MCF 10A (cell line): ENCODE measurements at regions of chr2 and their contacts with region 1.

Region 1: GRCh38 chr2:20661067-20661980 is 5.6 kb upstream of the GDF7 start:
- DNase-seq: peak; percentile 82
- H3K4me3 Mint-ChIP-seq: no peak overlapping the region
- H3K27ac Mint-ChIP-seq: no peak overlapping the region
- H3K4me1 Mint-ChIP-seq: peaks cover 7% of the 10 kb centered on the region
- H3K27me3 Mint-ChIP-seq: peaks cover 45% of the 10 kb centered on the region
- CTCF ChIP-seq: peak; percentile 96

Region 2: GRCh38 chr2:20573620-20574422 is 87.5 kb before region 1 on chr2:
- CTCF ChIA-PET with region 1: no interaction called
- POLR2A ChIA-PET with region 1: no interaction called
- intact Hi-C with region 1: no loop called
- DNase-seq: no peak
- H3K4me3 Mint-ChIP-seq: no peak overlapping the region
- H3K27ac Mint-ChIP-seq: no peak overlapping the region
- H3K4me1 Mint-ChIP-seq: peaks cover 25% of the 10 kb centered on the region
- H3K27me3 Mint-ChIP-seq: no peaks in the 10 kb centered on the region
- CTCF ChIP-seq: no peak

Region 3: DNA sequence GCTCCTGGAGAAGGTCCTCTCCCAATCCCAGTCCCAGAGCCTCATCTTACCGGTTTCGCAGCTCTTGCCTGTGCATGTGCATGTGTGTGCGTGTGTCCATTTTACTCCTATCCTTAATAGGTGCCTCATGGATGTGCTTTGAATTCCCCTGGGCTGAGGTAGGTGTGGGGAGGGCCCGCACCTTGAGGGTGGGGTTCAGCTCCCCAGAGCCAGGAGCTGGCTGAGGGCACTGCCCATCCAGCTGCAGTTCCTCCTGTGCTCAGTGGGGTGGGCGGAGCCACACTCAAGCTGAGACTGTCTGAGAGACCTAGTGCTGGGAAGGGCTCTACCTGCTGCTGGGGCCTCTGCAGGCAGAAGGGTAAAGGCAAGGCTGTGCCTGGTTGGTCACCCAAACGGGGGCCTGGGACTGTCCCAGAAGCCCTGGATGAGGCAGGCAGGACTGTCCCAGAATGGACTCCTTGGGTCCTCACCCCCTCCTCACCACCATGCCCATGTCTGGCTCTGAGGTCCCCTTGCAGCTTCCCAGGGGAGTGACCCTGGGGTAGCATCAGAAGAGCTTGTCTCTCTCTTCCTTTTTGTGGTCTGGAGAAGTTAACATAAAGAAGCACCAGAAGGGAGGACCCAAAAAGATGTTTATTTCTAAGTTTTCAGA is 14.5 kb after region 1 on chr2:
- CTCF ChIA-PET with region 1: interaction called, 127 read pairs
- POLR2A ChIA-PET with region 1: no interaction called
- intact Hi-C with region 1: no loop called
- DNase-seq: peak; percentile 24
- H3K4me3 Mint-ChIP-seq: no peak overlapping the region
- H3K27ac Mint-ChIP-seq: no peak overlapping the region
- H3K4me1 Mint-ChIP-seq: peaks cover 6% of the 10 kb centered on the region
- H3K27me3 Mint-ChIP-seq: no peaks in the 10 kb centered on the region
- CTCF ChIP-seq: no peak

Region 4: GRCh38 chr2:20698916-20699613 is 37.7 kb after region 1 on chr2:
- CTCF ChIA-PET with region 1: interaction called, 12 read pairs
- POLR2A ChIA-PET with region 1: no interaction called
- intact Hi-C with region 1: no loop called
- DNase-seq: no peak
- H3K4me3 Mint-ChIP-seq: no peak overlapping the region
- H3K27ac Mint-ChIP-seq: no peak overlapping the region
- H3K4me1 Mint-ChIP-seq: no peaks in the 10 kb centered on the region
- H3K27me3 Mint-ChIP-seq: no peaks in the 10 kb centered on the region
- CTCF ChIP-seq: no peak

Region 5: DNA sequence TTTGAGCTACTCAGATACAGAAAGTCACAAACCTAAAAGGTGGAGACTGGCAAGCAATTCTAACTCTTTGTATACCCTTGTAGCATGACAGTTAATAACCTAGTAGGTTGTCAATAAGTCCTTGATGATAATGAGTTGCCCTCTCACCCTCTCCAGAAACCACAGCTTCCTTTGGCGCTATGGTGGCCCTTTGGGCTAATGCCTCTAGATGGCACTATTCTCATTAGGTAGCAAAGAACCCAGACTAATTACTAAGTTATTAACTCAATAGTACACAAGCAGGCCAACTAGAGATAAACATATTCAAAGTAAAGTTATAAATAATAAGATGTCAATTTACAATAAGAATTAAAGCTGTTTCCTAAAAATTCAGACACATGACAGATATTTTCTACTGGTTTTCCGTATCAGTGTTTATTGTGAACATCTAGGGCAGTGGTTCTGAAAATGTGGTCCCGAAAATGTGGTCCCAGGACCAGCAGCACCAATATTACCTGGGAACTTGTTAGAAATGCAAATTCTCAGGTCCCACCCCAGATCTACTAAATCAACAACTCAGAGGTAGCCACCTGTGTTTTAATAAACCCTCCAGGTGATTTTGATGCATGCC is 120.4 kb after region 1 on chr2:
- CTCF ChIA-PET with region 1: interaction called, 30 read pairs
- POLR2A ChIA-PET with region 1: no interaction called
- intact Hi-C with region 1: loop called (anchors 2 kb)
- DNase-seq: peak; percentile 57
- H3K4me3 Mint-ChIP-seq: no peak overlapping the region
- H3K27ac Mint-ChIP-seq: no peak overlapping the region
- H3K4me1 Mint-ChIP-seq: no peaks in the 10 kb centered on the region
- H3K27me3 Mint-ChIP-seq: no peaks in the 10 kb centered on the region
- CTCF ChIP-seq: peak; percentile 64

Region 6: GRCh38 chr2:20970068-20970467 is 308.7 kb after region 1 on chr2:
- CTCF ChIA-PET with region 1: interaction called, 132 read pairs
- POLR2A ChIA-PET with region 1: interaction called, 3 read pairs
- intact Hi-C with region 1: no loop called
- DNase-seq: no peak
- H3K4me3 Mint-ChIP-seq: no peak overlapping the region
- H3K27ac Mint-ChIP-seq: no peak overlapping the region
- H3K4me1 Mint-ChIP-seq: no peaks in the 10 kb centered on the region
- H3K27me3 Mint-ChIP-seq: peaks cover 24% of the 10 kb centered on the region
- CTCF ChIP-seq: no peak

Region 7: GRCh38 chr2:21118302-21118920 is 457.1 kb after region 1 on chr2:
- CTCF ChIA-PET with region 1: interaction called, 69 read pairs
- POLR2A ChIA-PET with region 1: no interaction called
- intact Hi-C with region 1: loop called (anchors 1 kb)
- DNase-seq: peak; percentile 40
- H3K4me3 Mint-ChIP-seq: no peak overlapping the region
- H3K27ac Mint-ChIP-seq: no peak overlapping the region
- H3K4me1 Mint-ChIP-seq: no peaks in the 10 kb centered on the region
- H3K27me3 Mint-ChIP-seq: peaks cover 57% of the 10 kb centered on the region
- CTCF ChIP-seq: peak; percentile 49